GM13977 (cell line): ENCODE measurements at regions of chr1 and their contacts with region 1.

Region 1: DNA sequence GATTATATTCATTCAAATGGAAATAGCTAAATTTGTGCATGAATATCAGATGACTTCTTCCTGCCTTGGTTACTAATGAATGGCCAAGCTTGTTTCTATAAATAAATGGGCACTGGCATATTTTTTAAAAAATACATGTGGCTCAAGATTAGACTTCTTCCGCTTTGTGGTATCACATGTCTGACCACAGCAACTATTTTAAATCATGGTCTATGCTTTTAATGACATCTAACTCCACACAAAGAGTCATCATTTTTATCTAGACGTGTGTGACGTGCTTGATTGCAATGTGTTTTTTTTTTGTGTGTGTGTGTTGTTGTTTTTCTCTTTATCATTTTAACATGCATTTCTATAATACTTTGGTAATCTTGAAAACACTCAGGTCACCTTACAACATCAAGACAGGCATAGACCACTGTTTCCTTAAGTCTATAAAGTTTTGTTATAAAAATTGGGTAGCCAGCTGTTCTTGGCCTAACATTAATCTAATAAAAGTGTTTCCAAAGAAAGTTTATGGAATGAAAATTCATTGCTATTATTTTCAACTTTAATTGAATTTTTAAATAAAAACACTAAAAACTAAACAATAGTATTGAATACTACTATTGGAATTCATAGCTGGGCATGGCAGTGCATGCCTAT is 29.5 kb downstream of the RGS1 start:
- DNase-seq: no peak
- CTCF ChIP-seq: no peak

Region 2: GRCh38 chr1:190754666-190755065 is 1850.4 kb before region 1 on chr1:
- in situ Hi-C with region 1: no loop called
- DNase-seq: no peak
- CTCF ChIP-seq: no peak

Region 3: DNA sequence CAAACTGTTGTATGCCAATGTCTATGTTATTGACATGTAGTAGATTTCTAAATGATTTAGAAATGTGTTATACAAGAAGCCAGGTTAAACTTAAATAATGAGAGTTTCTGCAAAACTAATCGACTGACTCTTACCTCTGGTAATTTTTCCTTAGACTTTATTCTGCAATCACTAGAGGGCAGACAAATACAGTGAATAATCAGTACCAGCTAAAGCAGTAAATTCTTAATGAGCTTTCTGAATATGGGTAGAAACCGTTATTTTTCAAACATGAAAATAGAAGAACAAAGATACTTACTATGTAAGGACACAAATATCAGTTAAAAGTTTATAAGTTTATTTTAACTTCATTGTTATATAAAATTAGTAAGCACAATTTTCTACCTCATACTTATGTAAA is 127.5 kb before region 1 on chr1:
- in situ Hi-C with region 1: loop called (anchors 5 kb)
- DNase-seq: peak; percentile 36
- CTCF ChIP-seq: peak; percentile 53